AG04449 (cell line): ENCODE measurements at regions of chr17 and their contacts with region 1.

Region 1: GRCh38 chr17:16453493-16453851 is 38.1 kb downstream of the TRPV2 start:
- DNase-seq: no peak
- H3K4me3 ChIP-seq: no peak overlapping the region
- CTCF ChIP-seq: no peak

Region 2: DNA sequence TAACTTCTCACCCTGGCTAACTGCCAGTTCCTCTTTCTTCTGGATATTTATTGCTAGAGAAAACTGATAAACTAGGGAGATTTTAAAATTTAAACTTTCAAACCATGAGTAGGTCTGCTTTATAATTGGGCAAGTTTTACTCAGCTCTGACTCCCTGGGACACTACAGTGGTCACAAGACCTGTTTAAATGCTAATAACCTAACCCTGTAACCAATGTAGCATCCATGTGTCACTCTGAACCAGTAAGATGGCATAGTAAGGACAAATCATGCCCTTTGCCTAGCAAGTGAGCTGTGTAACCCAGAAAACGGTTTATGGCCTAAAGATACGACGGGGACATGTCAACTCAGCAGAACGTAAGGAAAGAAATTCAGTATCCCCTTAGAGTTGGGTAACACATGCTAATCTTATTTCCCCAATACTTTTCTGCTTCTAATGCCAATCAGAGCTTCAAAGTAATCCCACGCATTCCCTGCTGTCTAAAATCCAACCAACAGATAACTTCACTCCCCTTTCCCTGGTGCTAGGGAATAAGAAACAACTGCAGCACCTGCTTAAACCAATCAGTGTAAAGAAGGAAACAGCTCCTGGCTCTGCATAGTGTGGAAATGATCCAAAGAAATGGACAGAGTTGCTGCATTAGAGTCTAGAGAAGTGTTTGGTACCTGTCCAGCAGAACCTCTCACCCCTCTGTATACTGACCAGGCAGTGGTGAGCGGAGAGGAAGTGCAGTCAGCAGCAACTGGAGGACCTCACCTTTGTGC is 323.8 kb before region 1 on chr17:
- CTCF ChIA-PET with region 1: no interaction called
- POLR2A ChIA-PET with region 1: no interaction called
- DNase-seq: no peak
- H3K4me3 ChIP-seq: no peak overlapping the region
- CTCF ChIP-seq: no peak

Region 3: GRCh38 chr17:16428098-16428882 is 25.2 kb before region 1 on chr17:
- CTCF ChIA-PET with region 1: interaction called, 10 read pairs
- POLR2A ChIA-PET with region 1: no interaction called
- DNase-seq: no peak
- H3K4me3 ChIP-seq: no peak overlapping the region
- CTCF ChIP-seq: peak; percentile 87

Region 4: DNA sequence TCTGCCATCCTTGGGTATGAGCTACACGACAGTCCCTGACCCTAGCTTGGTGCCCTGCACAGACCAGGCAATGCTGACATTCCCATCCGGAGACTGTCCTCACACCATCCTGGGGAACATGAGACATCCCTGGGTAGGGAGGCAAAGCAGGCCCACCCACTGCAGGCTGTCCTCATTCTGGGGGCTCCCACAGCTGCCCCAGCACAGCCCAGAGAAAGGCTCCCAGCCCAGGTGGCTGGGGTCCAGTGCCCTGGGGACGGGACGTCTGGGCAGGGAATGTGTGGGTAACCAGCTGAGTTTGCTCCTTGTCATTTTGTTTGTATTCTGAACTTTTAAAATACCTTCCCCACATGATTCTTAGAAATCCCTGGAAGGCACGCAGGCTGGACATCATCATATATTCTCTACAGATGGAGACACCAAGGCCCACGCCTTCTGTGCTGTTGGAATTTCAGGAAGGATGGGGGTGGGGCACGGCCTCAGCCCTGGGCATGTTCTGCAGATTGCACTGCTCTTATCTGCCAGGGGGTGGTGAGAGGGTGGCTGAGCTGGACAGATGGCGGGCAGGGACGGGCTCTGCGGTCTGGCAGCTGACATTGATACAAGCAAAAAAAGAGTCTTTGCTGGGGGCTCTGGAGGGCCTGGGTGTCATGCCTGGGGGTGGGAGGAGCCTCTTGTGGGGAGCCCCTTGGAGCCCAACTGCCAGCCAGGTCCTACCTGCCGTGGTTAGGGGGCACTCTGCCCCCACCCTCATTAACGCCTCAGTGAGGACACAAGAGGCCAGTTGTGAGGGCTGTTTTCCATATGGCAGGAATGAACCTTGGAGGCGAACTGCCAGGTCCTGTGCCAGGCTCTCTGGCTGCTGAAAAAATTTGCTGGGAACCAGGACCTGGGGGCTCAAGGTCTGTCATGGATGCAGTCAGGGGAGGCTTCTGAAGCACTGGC is 10.2 kb after region 1 on chr17:
- CTCF ChIA-PET with region 1: interaction called, 59 read pairs
- POLR2A ChIA-PET with region 1: interaction called, 3 read pairs
- DNase-seq: no peak
- H3K4me3 ChIP-seq: no peak overlapping the region
- CTCF ChIP-seq: peak; percentile 59

Region 5: GRCh38 chr17:16477255-16477654 is 23.8 kb after region 1 on chr17:
- CTCF ChIA-PET with region 1: interaction called, 36 read pairs
- POLR2A ChIA-PET with region 1: no interaction called
- DNase-seq: peak; percentile 21
- H3K4me3 ChIP-seq: no peak overlapping the region
- CTCF ChIP-seq: no peak

Region 6: DNA sequence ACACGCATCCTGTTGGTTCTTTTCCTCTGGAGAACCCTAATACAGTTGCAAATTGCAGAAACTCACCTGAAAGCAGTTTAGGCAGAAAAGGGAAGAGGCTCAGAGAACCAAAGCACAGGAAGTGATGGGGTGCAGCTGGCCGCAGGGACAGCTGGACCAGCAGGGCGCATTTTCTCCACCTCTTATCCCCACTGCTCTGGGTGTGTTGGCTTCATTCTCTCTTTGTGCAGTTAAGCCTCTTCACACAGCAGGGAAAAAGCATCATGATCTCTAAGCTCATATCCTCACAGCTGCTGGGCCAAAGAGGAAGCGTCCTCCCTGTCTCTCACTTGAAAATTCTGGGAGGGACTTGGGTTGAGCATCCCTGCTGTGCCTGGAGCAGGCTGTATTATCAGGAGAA is 58.5 kb after region 1 on chr17:
- CTCF ChIA-PET with region 1: interaction called, 562 read pairs
- POLR2A ChIA-PET with region 1: interaction called, 3 read pairs
- DNase-seq: no peak
- H3K4me3 ChIP-seq: no peak overlapping the region
- CTCF ChIP-seq: no peak

Region 7: GRCh38 chr17:16589097-16589969 is 135.9 kb after region 1 on chr17:
- CTCF ChIA-PET with region 1: interaction called, 82 read pairs
- POLR2A ChIA-PET with region 1: no interaction called
- DNase-seq: peak; percentile 4
- H3K4me3 ChIP-seq: peak overlapping the region; percentile 69
- CTCF ChIP-seq: peak; percentile 99